PC-3 (cell line): ENCODE measurements at regions of chr2 and their contacts with region 1.

Region 1: DNA sequence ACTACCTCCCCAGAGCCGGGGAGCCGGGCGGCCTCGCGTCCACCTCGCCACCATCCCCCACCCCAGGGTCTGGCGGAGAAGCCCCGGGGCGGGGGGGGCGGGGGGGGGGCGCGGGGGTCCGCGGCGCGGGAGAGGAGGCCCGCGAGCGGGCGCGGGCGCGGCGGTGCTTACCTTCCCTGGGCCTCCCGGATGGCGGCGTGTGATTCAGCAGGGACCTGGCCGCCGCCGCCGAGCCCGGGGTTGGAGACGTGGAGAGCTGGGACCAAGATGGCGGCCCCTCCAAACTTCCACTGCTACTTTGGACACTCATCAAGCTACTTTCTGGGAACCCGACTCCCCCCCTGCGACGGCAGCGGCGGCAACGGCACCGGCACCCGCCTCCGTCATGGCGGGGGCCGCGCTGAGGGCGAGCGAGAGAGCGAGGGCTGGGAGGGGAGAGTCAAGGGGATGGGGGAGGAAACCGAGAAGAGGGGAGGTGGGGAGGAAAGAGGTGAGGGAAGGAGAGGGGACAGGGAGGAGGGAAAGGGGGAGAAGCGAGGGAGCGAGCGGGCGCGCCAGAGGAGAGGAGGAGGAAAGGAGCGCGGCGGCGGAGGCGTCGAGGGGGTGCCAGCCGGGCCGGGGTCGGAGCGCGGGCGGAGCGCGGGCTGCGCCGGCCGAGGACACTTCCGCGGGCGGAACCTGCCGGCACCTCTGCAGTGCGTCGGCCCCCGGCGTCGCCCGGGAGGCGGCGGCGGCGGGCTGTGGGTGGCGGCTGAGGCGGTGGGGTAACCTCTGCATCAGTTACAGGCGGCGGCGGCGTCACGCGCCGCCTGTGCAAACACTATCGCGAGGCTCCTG is at the start of gene TLK1:
- DNase-seq: peak; percentile 73
- ATAC-seq: peak; percentile 67
- H3K4me3 ChIP-seq: peak within 1 kb of the TSS; percentile 100
- H3K27ac ChIP-seq: peak within 1 kb of the TSS; percentile 84
- H3K4me1 ChIP-seq: peaks cover 10% of the 10 kb centered on the region
- H3K27me3 ChIP-seq: no peaks in the 10 kb centered on the region
- CTCF ChIP-seq: no peak
- total RNA-seq, gene TLK1: 10.1 and 17.6 TPM in 2 replicates

Region 2: DNA sequence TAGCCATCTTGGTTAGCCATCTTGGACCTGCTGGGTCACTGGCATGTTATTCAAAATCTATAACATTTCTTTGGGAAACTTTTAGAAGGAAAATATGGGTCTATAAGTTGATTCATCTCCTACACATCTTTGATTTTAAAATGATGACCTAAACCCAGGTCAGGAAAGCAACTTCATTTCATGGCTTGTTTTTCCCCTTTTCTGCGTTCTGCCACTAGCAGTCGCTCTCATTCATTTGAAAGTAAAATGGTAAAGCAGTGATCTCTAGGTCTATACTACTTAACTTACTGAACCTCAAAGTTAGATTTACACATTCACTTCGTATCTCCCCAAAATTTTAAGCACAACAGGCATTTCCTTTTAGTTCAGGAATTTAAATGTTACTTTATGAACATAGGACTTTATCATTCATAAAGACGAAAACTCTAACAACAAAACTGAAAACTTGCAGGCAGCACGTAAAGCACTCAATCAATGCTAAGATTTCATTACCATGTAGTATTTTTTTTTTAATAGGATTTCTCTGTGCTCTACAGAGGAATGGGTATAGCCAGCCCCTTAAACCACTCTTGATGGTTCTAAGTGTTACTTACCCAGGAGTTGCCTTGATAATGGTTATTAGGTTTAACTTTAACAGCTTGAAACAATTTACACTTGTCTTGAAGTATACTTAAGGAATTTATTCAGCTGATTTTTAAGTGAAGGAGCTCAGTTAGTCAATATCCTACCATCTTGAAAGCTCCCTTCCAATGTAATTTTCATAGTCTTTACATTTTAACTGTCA is 168.7 kb before region 1 on chr2:
- CTCF ChIA-PET with region 1: no interaction called
- POLR2A ChIA-PET with region 1: no interaction called
- intact Hi-C with region 1: loop called (anchors 5 kb)
- DNase-seq: no peak
- ATAC-seq: no peak
- H3K4me3 ChIP-seq: no peak overlapping the region
- H3K27ac ChIP-seq: no peak overlapping the region
- H3K4me1 ChIP-seq: no peaks in the 10 kb centered on the region
- H3K27me3 ChIP-seq: no peaks in the 10 kb centered on the region
- CTCF ChIP-seq: peak; percentile 22; the same call in 1 of the 2 replicates

Region 3: DNA sequence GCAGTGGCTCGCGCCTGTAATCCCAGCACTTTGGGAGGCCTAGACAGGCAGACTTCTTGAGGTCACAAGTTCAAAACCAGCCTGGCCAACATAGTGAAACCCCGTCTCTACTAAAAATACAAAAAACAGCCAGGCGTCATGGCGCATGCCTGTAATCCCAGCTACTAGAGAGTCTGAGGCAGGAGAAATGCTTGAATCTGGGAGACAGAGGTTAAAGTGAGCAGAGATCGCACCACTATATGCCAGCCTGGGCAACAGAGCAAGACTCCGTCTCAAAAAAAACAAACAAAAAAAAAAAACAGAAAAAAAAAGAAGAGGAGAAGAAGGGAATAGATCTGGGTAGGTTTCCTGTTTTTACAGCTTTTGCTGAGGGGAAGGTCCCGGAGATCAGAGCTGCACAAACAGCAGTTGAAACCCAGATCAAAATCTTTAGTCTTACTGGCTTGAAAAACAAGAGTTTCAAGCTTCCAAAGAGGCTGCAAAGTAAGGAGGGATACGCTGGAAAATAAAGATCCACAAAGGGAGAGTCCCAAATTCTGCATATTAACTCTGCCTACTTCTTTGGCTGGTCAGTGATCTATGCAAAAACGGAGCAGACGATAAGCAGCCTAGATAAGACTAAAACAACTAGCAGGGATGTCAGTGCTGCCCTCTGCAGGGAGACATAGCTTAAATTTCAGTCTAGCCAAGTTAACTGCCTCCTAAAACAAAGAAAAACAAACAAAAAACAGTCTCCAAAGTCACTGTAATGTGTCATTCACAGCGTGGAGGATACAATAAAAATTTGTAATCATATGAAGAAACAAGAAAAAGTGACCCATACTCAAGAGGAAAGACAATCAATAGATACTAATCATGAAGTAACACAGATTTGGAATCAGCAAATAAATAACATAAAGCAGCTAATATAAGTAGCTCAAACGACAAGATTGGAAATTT is 73.7 kb before region 1 on chr2:
- CTCF ChIA-PET with region 1: no interaction called
- POLR2A ChIA-PET with region 1: no interaction called
- intact Hi-C with region 1: loop called (anchors 5 kb)
- DNase-seq: peak; percentile 66
- ATAC-seq: peak; percentile 84
- H3K4me3 ChIP-seq: no peak overlapping the region
- H3K27ac ChIP-seq: no peak overlapping the region
- H3K4me1 ChIP-seq: peaks cover 5% of the 10 kb centered on the region
- H3K27me3 ChIP-seq: no peaks in the 10 kb centered on the region
- CTCF ChIP-seq: peak; percentile 89

Region 4: DNA sequence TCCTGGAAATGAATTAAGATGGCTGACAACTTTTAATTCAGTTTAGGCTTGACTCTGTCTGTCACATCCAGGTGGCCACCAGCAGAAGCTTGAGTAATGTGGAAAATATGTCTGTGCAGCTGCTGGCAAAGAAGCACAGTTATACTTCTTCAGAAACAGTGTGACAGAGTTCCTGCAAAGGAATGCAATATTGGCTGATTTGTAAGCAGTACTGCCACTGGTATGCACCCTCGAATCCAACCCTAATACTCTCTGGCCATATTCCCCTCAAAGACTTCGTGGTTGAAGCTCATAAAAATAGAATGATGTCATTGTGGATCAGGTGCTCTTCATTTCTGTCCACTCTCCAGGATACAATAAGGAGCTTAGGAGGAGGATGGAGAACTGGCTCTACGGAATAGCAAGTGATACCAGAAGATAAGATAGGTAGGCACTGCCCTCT is 187.3 kb after region 1 on chr2:
- CTCF ChIA-PET with region 1: no interaction called
- POLR2A ChIA-PET with region 1: no interaction called
- intact Hi-C with region 1: loop called (anchors 10 kb)
- DNase-seq: peak; percentile 82
- ATAC-seq: peak; percentile 91
- H3K4me3 ChIP-seq: no peak overlapping the region
- H3K27ac ChIP-seq: peak overlapping the region; percentile 65
- H3K4me1 ChIP-seq: peaks cover 25% of the 10 kb centered on the region
- H3K27me3 ChIP-seq: no peaks in the 10 kb centered on the region
- CTCF ChIP-seq: no peak